Activated CD4-positive, alpha-beta memory T cell treated with anti-CD3 and anti-CD28 coated beads, Interleukin-2, amount 10 ng/mL, durations not matched to agents 7 days and 5 days (primary cell): ENCODE measurements at regions of chr1 and their contacts with region 1.

Region 1: DNA sequence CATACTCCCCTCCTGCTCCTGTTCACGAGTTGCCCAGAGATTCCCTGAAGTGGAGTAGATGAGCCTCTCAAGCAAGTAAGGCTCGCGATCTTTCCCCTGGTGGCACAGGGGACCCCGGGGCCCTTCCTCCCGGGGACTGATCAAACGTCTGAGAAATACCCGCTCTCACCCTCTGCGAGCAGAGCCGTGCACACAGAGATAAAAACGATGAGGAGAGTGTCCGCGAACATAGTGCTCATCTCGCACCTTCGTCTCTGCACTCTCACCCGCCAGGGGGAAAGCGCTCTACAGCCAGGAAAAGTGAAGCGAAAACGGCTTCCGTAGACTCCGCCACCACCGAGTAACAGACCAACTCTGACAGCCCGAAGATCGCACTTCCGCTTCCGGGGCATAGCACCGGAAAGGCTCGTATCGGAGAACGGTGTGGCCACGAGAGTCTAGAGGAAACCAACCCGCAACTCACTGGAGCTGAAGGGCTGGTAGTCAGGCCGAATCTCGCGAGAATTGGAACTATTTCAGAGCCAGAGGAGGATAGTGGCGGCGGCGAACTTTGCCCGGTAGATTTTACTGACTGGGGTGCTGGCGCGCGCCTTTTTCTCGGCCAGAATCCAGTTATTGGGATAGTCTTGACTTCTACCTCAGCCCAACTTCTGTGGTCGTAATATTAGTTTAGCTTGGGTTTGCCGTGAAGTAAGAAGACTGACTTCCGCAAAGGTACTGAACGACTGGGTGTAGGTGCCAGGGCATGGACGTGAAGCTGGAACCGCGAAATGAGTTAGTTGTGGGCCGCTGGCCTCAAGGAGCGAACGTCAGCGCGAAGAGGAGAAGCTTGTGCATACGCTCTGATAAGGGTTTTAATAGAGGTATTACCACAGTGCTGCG is at the start of gene TMCO1:
- DNase-seq: peak; percentile 97
- H3K4me3 Mint-ChIP-seq: peak within 1 kb of the TSS; percentile 98
- H3K27ac Mint-ChIP-seq: peak within 1 kb of the TSS; percentile 99
- H3K4me1 Mint-ChIP-seq: peaks cover 55% of the 10 kb centered on the region
- H3K27me3 Mint-ChIP-seq: no peaks in the 10 kb centered on the region
- total RNA-seq, gene TMCO1: 113 to 115 TPM

Region 2: DNA sequence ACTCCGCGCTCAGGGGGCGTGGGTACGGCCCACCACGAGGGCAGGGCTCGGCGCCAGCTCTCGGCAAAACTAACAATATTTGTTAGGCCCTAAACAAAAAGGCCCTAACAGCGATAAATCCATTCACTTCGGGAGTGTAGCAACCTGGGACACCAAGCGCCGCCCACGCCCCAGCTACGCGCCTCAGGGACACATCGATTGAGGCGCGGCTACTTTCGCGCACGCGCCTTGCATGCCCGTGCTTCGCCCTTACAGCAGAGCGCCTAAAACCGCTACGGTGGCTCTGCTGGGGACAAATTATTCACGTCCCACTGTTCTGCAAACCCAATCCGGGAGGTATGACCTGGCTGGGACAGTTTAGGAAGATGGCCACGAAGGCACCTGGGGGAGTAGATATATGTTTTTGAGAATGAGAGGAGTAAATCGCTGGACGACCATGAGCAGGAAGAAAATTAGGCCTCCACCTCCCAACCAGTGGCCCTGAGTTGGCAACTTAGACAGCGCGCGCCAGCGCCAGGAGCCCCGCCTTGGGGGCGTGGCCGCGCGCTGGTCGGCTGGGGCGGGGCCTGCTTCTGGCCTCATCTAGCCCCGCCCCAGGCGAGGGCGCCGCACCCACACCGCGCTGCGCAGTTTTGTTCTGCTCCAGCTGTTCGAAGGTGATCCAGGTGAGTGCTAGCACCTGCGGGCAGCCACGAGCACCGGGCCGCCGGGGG is 138.0 kb before region 1 on chr1 and contains the start of gene MGST3:
- CTCF ChIA-PET with region 1: interaction called, 3 read pairs
- POLR2A ChIA-PET with region 1: interaction called, 11 read pairs
- DNase-seq: peak; percentile 93
- H3K4me3 Mint-ChIP-seq: no peak within 1 kb of the TSS
- H3K27ac Mint-ChIP-seq: peak within 1 kb of the TSS; percentile 56
- H3K4me1 Mint-ChIP-seq: peaks cover 16% of the 10 kb centered on the region
- H3K27me3 Mint-ChIP-seq: peaks cover 10% of the 10 kb centered on the region
- total RNA-seq, gene MGST3: 63.4 to 70.3 TPM

Region 3: GRCh38 chr1:165755393-165756010 is 13.3 kb before region 1 on chr1:
- CTCF ChIA-PET with region 1: no interaction called
- POLR2A ChIA-PET with region 1: interaction called, 15 read pairs
- DNase-seq: no peak
- H3K4me3 Mint-ChIP-seq: no peak overlapping the region
- H3K27ac Mint-ChIP-seq: no peak overlapping the region
- H3K4me1 Mint-ChIP-seq: peaks cover 19% of the 10 kb centered on the region
- H3K27me3 Mint-ChIP-seq: no peaks in the 10 kb centered on the region

Region 4: DNA sequence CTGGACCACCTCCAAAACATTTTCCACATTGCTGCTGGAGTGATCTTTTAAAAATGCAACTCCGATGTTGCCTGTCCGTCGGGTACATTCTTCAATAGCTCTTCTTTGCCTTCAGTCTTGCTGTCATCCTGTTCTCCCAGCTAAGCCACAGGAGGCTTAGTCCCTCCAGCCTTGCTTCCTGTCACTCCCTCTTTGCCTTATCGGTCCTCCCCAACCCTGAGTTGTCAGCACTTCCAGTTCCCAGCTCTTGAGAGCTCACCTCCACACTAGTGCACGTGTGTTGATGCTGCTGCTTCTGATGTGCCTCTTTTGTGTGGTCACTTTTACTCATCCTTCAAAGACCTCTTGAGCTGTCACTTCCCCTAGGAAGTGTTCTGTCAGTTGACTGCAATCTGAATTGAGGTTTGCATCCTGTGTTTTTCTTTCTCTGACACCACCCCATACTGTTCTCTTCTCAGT is 73.9 kb after region 1 on chr1:
- CTCF ChIA-PET with region 1: no interaction called
- POLR2A ChIA-PET with region 1: interaction called, 15 read pairs
- DNase-seq: peak; percentile 41
- H3K4me3 Mint-ChIP-seq: peak overlapping the region; percentile 9
- H3K27ac Mint-ChIP-seq: peak overlapping the region; percentile 31
- H3K4me1 Mint-ChIP-seq: peaks cover 62% of the 10 kb centered on the region
- H3K27me3 Mint-ChIP-seq: no peaks in the 10 kb centered on the region

Region 5: DNA sequence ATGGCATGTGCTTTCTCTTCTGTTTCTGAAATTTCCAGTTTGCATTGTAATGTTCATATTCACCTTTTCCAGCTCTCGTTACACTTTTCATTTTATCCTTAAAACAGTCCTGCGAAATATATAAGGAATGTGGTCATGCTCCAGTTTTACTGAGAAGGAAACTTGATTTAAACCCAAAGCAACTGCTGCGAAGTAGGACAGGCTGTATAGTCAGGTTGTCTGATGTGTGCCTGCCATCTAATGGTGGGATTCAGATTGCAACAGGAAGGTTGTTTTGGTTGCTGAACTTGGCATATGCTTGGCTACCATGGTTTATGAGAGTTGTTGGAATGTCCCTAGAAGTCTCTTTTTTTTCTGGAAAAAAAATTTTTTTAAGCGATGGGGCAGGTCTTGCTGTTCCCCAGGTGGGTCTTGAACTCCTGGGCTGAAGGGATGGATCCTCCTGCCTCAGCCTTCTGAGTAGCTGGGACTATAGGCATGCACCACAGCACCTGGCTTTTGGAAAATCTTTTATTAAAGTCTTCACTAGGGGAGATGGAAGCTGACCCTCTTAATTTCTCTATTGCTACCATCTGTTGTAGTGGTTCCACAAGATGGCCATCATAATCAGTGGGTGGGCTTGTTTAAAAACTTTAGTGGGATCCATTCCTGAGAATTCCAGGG is 145.5 kb after region 1 on chr1:
- CTCF ChIA-PET with region 1: interaction called, 11 read pairs
- POLR2A ChIA-PET with region 1: interaction called, 5 read pairs
- DNase-seq: peak; percentile 72
- H3K4me3 Mint-ChIP-seq: no peak overlapping the region
- H3K27ac Mint-ChIP-seq: no peak overlapping the region
- H3K4me1 Mint-ChIP-seq: peaks cover 4% of the 10 kb centered on the region
- H3K27me3 Mint-ChIP-seq: no peaks in the 10 kb centered on the region